Activated CD8-positive, alpha-beta T cell treated with anti-CD3 and anti-CD28 coated beads, Interleukin-2, amount 10 ng/mL, durations not matched to agents 7 days and 5 days (primary cell): ENCODE measurements at regions of chr1 and their contacts with region 1.

Region 1: DNA sequence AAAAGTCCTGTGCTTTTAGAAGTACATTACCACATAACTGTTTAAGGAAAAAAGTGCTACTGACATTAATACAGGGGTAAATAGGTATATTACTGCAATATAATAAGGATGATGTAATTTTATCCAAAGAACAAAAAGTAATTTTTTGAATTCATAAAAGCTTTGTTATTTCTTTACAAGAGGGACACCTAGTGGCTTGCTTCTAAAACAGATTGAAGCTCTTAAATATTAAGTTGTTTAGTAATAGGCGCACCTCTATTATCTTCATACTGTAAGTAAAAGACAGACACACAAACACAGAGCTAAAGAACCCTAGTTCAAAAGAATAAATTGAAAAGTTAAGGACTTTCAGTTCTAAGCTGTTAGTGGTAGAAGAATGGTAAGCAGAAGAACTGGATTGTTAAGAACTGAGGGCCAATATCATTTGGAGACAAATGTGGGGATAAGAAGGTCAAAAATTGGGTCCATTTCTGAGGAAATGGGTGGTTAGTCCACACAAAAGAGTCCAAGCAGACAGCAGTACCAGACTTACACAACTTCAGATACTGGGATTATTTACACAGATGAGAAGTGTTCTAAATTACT is 15.4 kb downstream of the ZNHIT6 start:
- DNase-seq: no peak
- ATAC-seq: no peak
- H3K4me3 Mint-ChIP-seq: no peak overlapping the region
- H3K27ac Mint-ChIP-seq: no peak overlapping the region
- H3K4me1 Mint-ChIP-seq: no peaks in the 10 kb centered on the region
- H3K27me3 Mint-ChIP-seq: no peaks in the 10 kb centered on the region

Region 2: GRCh38 chr1:85307987-85308832 is 384.6 kb before region 1 on chr1:
- CTCF ChIA-PET with region 1: interaction called, 12 read pairs
- POLR2A ChIA-PET with region 1: no interaction called
- DNase-seq: peak; percentile 74
- ATAC-seq: peak; percentile 90
- H3K4me3 Mint-ChIP-seq: no peak overlapping the region
- H3K27ac Mint-ChIP-seq: no peak overlapping the region
- H3K4me1 Mint-ChIP-seq: no peaks in the 10 kb centered on the region
- H3K27me3 Mint-ChIP-seq: peaks cover 41% of the 10 kb centered on the region

Region 3: DNA sequence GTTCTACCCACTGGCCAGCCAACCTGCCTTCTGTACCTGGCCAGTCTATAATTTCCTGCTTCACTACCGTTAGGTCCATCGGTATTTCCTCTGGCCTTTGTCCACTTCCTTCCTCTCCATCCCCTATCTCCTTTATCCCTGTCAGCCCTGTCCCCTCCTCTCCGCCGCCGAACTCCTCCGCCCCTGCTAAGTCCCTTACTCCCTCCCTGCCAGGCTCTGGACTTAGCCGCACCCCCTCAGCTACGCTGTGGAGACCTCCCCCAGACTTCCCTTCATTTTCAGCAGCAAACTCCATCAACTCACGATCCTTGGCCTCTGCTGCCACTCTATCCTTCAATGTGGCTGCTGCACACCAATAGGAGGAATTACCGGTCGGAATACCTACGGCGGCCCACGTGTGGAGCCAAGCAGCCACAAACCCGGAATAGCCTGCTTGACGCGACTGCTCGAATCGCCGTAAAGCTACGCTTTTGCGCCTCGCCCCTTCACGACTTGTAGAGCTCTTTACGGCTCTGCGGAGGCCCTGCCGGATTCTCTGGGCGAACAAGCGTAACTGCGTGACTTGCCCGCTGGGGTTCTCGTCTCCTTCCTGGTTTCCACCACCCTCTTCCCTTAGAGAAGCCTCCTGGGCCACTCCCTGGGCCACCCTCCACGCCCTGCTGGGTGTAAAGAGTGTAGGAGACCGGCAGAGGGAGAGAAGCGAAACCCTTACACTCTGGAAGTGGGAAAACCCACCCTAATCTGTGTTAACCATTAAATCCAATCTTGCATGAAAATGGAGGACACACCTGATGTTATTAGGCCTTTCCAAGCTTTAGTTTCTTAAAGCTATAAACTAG is 15.4 kb after region 1 on chr1 and contains the start of gene ZNHIT6:
- CTCF ChIA-PET with region 1: interaction called, 12 read pairs
- POLR2A ChIA-PET with region 1: interaction called, 5 read pairs
- DNase-seq: peak; percentile 92
- ATAC-seq: peak; percentile 92
- H3K4me3 Mint-ChIP-seq: no peak within 1 kb of the TSS
- H3K27ac Mint-ChIP-seq: no peak within 1 kb of the TSS
- H3K4me1 Mint-ChIP-seq: peaks cover 22% of the 10 kb centered on the region
- H3K27me3 Mint-ChIP-seq: no peaks in the 10 kb centered on the region
- total RNA-seq, gene ZNHIT6: 16.7 to 17.9 TPM

Region 4: GRCh38 chr1:85756864-85757263 is 64.0 kb after region 1 on chr1:
- CTCF ChIA-PET with region 1: no interaction called
- POLR2A ChIA-PET with region 1: no interaction called
- DNase-seq: no peak
- ATAC-seq: no peak
- H3K4me3 Mint-ChIP-seq: no peak overlapping the region
- H3K27ac Mint-ChIP-seq: no peak overlapping the region
- H3K4me1 Mint-ChIP-seq: no peaks in the 10 kb centered on the region
- H3K27me3 Mint-ChIP-seq: no peaks in the 10 kb centered on the region